ENCODE measurements at regions of chr6 and their contacts with region 1.

Region 1: DNA sequence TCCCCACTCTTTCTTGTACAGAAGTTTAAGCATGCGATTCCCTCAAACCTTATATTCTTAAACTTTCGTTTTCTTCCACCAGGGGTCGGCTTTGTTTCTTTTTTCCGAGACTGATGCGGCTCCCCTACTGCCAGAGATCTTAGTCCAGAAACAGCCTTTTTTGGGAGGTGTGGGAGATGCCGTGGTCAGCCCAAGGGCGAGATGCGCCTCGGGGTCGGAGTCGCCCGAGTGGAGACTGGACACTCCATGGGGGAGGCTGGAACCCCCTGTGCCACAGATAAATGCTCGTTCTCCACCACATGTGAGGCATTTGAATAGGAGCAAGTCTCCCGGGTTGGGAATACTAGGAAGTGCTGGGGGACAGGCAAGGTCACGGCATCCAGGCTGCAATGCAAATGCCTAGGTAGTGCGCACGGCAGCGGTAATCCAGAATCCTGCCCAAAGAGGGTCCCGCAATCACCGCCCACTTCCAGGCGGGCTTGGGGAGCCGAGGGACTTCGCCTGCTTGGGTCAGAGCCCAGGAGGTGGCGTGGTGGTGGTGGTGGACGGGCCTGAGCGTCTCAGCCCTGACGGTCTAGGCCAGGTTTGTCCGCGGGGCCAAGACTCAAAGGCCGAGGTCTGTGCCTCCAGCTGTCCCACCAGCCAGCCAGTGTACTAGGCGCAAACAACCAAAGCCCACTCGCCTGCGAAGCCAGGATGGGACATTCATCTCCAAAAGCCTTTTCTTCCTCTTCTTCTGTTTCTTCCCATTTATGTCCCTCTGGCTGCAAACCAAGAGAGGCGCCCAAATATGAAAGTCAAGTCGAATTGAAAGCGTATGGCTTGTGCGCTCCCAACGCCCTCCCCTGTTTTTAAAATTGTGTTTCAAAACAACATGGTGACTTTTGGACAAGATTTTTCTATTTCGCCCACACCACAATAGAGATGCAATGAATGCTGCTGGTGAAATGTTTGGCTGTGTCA is 39.3 kb upstream of the OSTM1 start:
- DNase-seq: no peak
- H3K4me3 Mint-ChIP-seq: no peak overlapping the region
- H3K27ac Mint-ChIP-seq: no peak overlapping the region
- H3K4me1 Mint-ChIP-seq: peaks cover 28% of the 10 kb centered on the region
- H3K27me3 Mint-ChIP-seq: peaks cover 80% of the 10 kb centered on the region

Region 2: GRCh38 chr6:108157234-108157980 is 43.6 kb after region 1 on chr6:
- intact Hi-C with region 1: loop called (anchors 2 kb)
- DNase-seq: no peak
- H3K4me3 Mint-ChIP-seq: no peak overlapping the region
- H3K27ac Mint-ChIP-seq: no peak overlapping the region
- H3K4me1 Mint-ChIP-seq: peaks cover 3% of the 10 kb centered on the region
- H3K27me3 Mint-ChIP-seq: peaks cover 85% of the 10 kb centered on the region

Region 3: DNA sequence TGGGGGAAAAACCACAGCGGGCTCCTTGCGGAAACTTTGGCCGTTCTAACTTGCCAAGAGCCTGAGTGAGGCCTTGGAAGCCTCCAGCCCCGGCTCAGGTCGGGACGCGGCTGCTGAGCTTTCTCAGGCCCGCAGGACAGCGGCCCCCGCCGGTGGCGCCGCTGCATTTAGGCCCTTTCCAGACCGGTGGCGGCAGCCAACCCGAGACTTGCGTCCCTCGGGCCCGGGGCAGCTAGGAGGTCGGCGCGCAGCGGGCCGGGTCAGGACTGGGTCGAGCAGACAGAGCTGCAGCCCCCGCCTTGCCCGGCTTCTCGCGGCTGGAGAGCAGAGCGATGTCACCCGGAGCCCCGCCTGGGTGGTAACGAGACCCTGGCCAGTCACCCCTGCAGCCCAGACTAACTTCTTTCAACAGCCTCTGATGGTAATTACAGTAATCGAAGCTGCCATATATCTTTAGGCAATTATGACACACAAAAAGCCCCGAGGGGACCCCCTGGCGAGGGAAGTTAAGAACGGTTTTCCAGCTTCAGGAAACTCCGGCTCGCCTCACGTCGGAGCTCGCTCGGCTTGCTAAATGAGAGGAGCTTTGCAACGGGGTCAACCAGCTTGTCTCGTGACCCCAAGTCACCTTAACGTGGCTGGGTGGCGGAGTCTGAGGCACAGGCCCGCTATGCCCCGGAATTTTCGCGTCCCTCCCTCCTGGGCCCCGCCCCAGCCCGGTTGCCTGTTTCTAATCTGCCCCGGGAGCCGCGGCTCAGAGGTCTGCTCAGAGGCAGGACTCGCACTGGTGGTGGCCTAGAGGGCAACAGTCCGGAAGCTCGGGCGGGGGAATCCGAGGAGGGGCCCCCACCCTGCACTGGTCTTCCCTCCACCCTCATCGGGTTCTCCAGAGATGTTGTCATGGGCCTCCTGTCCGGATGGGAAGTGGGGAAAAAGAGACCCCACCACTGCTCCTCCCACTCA is 54.9 kb after region 1 on chr6:
- intact Hi-C with region 1: loop called (anchors 2 kb)
- DNase-seq: no peak
- H3K4me3 Mint-ChIP-seq: no peak overlapping the region
- H3K27ac Mint-ChIP-seq: no peak overlapping the region
- H3K4me1 Mint-ChIP-seq: peaks cover 5% of the 10 kb centered on the region
- H3K27me3 Mint-ChIP-seq: peaks cover 84% of the 10 kb centered on the region

Region 4: GRCh38 chr6:108492131-108492766 is 378.4 kb after region 1 on chr6:
- intact Hi-C with region 1: loop called (anchors 10 kb)
- DNase-seq: no peak
- H3K4me3 Mint-ChIP-seq: no peak overlapping the region
- H3K27ac Mint-ChIP-seq: no peak overlapping the region
- H3K4me1 Mint-ChIP-seq: no peaks in the 10 kb centered on the region
- H3K27me3 Mint-ChIP-seq: peaks cover 19% of the 10 kb centered on the region

Region 5: DNA sequence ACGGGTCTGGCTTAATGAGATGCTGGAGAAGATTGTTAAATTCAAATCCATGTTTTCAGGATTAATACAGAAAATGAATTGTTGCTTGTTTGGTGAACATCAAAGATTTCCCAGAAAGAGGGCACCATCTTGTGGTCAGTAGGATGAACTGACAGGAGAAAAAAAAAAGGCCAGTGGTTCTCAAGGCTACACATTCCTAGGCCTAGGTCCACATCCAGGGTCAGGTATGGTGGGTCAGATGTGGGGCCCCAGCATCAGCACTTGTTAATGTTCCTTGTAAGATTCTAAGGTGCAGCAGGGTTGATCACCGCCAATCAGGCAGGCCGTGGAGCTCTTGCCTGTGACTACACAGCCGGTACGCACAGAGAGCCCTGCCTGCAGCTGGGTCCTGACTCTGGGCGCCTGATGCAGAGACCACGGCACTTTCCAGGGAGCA is 412.9 kb after region 1 on chr6:
- intact Hi-C with region 1: loop called (anchors 5 kb)
- DNase-seq: no peak
- H3K4me3 Mint-ChIP-seq: no peak overlapping the region
- H3K27ac Mint-ChIP-seq: no peak overlapping the region
- H3K4me1 Mint-ChIP-seq: no peaks in the 10 kb centered on the region
- H3K27me3 Mint-ChIP-seq: peaks cover 22% of the 10 kb centered on the region

Measured in activated T-helper 2 cell treated with anti-CD3 and anti-CD28 coated beads, Interferon-gamma antibody, Interleukin-2, Interleukin-4, amounts not matched to agents 10 μg/mL and 5 μg/mL and 100 μg/mL, durations not matched to agents 14 hours and 24 hours and 36 hours (primary cell).